Left ventricle myocardium superior (tissue), 1 donor: ENCODE measurements at regions of chr15 and their contacts with region 1.

Region 1: DNA sequence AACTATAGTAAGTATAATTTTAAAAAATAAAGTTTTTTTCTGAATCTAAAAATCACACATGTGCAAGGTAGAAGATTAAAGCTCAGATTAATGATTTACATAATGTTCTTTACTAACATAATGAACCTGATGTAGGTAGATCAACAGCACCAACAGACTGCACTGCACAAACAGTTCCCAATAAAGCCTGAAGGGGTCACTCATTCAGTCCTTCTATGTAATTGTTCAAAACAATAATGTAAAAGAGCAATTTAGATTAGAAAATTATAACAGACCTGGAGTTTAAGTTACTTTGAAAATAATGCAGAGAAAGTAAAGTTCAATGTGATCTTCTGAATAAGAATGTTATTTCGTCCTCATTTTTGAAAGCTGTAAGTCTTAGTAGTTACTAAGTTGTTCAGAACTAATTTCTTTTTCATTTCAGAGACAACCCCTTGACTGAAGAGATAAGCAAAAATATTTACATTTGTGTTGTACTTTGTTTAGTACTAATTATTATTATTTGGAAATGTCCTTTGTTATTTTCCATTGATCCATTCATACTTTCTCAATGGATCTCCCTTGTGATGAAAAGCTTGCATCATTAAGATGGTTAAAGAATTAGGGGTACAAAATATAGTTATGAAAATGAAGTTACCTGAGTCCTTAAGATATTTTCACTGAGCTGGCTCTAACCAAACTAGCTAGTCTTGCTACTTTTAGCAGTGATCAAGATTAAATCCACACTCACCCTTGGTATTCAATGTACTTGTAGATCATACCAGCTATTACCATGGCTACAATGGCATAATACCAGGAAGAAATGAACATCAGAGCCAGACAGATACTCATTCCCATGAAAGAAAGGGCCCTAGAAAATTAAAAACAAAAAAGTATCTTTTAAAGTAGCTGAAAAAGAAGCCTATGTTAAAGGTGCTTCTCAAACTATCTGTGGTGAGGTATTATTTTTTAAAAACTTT is 16.8 kb downstream of the EMC4 start:
- DNase-seq: no peak
- ATAC-seq: peak; percentile 52

Region 2: DNA sequence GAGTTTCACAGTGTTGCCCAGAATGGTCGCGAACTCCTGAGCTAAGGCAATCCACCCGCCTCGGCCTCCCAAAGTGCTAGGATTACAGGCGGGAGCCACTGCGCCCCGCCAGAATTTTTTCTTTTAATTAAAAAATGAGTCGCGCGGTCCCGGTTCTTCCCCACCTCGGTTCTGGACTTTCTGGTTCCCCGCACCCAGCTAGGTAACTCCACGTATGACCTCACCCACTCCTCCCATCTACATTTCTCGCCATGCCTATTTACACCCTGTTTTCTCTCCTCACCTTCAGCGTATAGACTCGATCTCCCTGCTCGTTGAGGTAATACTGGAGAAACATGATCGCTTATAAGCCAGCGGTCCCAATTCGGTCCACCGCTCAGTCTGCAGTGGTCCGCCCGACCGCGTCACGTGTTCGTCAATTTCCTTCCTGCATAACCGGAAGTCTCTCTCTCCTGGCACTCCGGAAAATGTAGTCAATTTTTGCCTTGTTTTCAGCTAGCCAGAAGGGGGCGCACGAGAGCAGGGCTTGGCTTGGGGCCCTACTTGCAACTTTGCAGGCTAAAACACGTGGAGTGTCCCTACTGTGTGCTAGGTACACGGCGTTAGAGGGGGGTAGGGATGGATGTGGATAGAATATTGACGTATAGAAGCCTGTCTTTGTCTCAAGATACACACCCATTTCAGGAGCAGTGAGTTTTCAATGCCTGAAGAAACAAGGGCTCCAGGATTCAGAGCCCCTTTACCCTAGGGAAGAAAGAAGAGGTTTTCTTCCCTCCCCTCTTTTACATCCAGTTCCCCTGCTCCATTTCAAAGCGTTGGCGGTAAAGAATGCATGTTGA is 101.3 kb after region 1 on chr15 and contains the starts of genes NOP10 and NUTM1:
- intact Hi-C with region 1: loop called (anchors 10 kb)
- DNase-seq: peak; percentile 91
- ATAC-seq: peak; percentile 95
- total RNA-seq, gene NOP10: 146 TPM
- total RNA-seq, gene NUTM1: not detected